ENCODE measurements at regions of chr1 and their contacts with region 1.

Region 1: DNA sequence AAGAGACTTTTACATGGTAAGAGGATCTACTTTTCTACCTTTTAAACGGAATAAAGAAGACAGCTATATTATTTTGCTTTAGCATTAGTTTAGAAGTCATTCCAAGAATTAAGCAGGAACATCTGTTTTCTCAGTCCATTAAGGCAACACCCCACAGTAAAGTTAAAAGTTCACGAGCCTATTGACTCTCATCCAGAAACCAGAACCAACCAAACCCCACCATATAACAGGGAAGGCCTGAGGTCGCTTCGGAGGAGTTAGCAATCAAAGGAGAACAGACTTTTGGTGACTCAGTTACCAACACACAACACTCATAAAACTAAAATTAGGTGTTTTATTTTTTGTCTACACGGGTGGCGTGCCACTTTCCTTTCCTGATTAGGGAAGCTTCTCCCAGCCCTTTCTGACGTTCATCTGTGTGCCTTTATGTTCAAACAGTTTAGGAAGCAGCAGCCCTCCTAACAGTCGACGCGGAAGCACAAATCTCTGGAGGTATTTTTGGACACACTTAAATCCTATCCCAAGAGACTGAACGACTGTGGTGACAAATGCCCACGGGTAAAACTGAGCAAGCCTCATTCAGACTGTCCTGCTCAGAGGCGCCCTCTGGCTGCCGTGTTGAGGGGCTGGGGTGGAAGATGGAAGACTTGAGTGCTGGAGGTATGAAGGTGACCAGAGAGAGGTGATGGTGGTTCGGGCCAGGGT is 8.6 kb upstream of the PLA2G2C start:
- DNase-seq: peak; percentile 59 to 83 (median 70)
- ATAC-seq: peak; percentile 67
- H3K4me3 ChIP-seq: no peak overlapping the region
- H3K4me3 Mint-ChIP-seq: no peak overlapping the region
- H3K27ac ChIP-seq: no peak overlapping the region
- H3K27ac Mint-ChIP-seq: no peak overlapping the region
- H3K4me1 ChIP-seq: peaks cover 4% of the 10 kb centered on the region
- H3K4me1 Mint-ChIP-seq: no peaks in the 10 kb centered on the region
- H3K27me3 ChIP-seq: peaks cover 0 to 2% of the 10 kb centered on the region in 2 experiments
- H3K27me3 Mint-ChIP-seq: peaks cover 5% of the 10 kb centered on the region
- CTCF ChIP-seq: peak; percentile 72

Region 2: DNA sequence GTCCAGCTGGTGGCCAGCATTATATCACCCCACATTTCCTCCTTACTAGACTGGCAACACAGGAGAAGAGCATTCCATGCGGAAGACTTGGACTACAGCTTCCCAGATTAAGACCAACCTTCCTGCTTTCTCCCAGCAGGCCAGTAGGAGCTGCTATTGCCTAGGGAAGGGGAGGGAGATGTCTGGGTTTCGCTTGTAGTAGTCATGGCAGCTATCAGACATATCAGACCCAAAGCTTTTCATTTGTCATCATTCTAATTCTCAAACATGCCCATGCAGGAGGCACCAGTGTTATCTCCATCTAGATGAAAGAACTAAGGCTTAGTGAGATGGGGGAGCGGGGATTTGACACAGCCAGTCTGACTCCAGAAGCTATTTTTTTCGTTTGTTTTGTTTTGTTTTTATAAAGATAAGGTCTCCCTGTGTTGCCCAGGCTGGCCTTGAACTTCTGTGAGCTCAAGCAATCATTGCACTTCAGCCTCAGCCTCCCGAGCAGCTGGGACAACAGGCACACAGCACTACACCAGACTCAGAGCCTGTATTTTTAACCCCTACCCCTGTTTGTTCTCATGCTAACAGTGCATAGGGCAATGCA is 220.0 kb before region 1 on chr1:
- CTCF ChIA-PET with region 1: interaction called, 9 read pairs
- POLR2A ChIA-PET with region 1: no interaction called
- intact Hi-C with region 1: loop called (anchors 1 to 10 kb)
- DNase-seq: peak in 5 of 14 experiments; percentile 5 to 52 (median 36)
- ATAC-seq: no peak
- H3K4me3 ChIP-seq: no peak overlapping the region
- H3K4me3 Mint-ChIP-seq: no peak overlapping the region
- H3K27ac ChIP-seq: no peak overlapping the region
- H3K27ac Mint-ChIP-seq: no peak overlapping the region
- H3K4me1 ChIP-seq: no peaks in the 10 kb centered on the region
- H3K4me1 Mint-ChIP-seq: no peaks in the 10 kb centered on the region
- H3K27me3 ChIP-seq: peaks cover 0 to 6% of the 10 kb centered on the region in 2 experiments
- H3K27me3 Mint-ChIP-seq: peaks cover 51% of the 10 kb centered on the region
- CTCF ChIP-seq: no peak

Region 3: GRCh38 chr1:20100632-20101355 is 94.1 kb before region 1 on chr1:
- CTCF ChIA-PET with region 1: interaction called, 5 read pairs
- POLR2A ChIA-PET with region 1: no interaction called
- intact Hi-C with region 1: loop called (anchors 1 to 2 kb)
- DNase-seq: peak in 7 of 14 experiments; percentile 2 to 48 (median 24)
- ATAC-seq: no peak
- H3K4me3 ChIP-seq: no peak overlapping the region
- H3K4me3 Mint-ChIP-seq: no peak overlapping the region
- H3K27ac ChIP-seq: no peak overlapping the region
- H3K27ac Mint-ChIP-seq: no peak overlapping the region
- H3K4me1 ChIP-seq: no peaks in the 10 kb centered on the region
- H3K4me1 Mint-ChIP-seq: no peaks in the 10 kb centered on the region
- H3K27me3 ChIP-seq: no peaks in the 10 kb centered on the region
- H3K27me3 Mint-ChIP-seq: no peaks in the 10 kb centered on the region
- CTCF ChIP-seq: peak; percentile 29